Pancreas (tissue), 10 donors: ENCODE measurements at regions of chr2 and their contacts with region 1.

Region 1: DNA sequence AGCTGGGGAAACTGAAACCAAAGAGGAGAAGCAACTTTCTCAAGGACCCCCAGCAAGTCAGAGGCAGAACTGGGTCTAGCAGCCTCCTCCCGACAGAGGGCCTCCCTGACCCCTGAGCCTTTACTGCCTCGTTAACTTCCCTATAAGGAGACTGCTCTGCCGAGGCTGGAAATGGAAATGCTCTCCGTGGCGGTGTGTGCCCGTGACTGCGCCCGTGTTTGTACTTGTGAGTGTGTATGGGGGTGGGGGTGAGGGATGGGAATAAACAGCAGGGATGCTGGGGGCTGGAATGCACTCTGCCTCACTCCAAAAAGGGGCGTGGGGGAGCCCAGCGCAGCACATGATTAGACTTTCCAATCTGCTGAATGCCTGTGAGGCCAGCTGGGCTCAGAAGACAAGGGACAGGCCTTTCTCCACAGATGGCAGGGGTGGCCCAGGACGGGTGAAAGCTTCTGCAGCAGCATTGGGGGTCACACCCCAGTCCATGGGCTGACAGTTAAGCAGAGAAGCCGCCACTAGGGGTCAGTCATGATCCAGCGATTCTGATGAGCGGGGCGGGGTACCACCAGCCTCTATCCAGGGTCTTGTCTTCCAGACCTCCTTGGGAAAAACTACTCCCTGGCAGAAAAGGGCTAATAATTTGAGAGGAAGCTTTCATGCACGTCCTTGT is 26.8 kb downstream of the MPHOSPH10 start:
- DNase-seq: peak in 5 of 6 donors; percentile 20 to 68 (median 49)
- ATAC-seq: peak; percentile 61 to 85 (median 76)
- H3K4me3 ChIP-seq: no peak overlapping the region
- H3K27ac ChIP-seq: no peak overlapping the region
- H3K4me1 ChIP-seq: no peaks in the 10 kb centered on the region
- H3K27me3 ChIP-seq: no peaks in the 10 kb centered on the region
- CTCF ChIP-seq: peak; percentile 25 to 59 (median 52)

Region 2: GRCh38 chr2:71505086-71505769 is 348.0 kb after region 1 on chr2:
- intact Hi-C with region 1: loop called in 1 of 3 experiments (anchors 10 kb)
- DNase-seq: no peak
- ATAC-seq: no peak
- H3K4me3 ChIP-seq: no peak overlapping the region
- H3K27ac ChIP-seq: no peak overlapping the region
- H3K4me1 ChIP-seq: no peaks in the 10 kb centered on the region
- H3K27me3 ChIP-seq: peaks cover 0 to 4% (median 0%) of the 10 kb centered on the region in 4 donors
- CTCF ChIP-seq: no peak